ENCODE measurements at regions of chr9 and their contacts with region 1.

Region 1: GRCh38 chr9:13427587-13427986 is 148.1 kb upstream of the MPDZ start:
- DNase-seq: no peak
- ATAC-seq: peak; percentile 59

Region 2: GRCh38 chr9:13364271-13365000 is 63.2 kb before region 1 on chr9:
- intact Hi-C with region 1: no loop called
- DNase-seq: no peak
- ATAC-seq: no peak

Region 3: DNA sequence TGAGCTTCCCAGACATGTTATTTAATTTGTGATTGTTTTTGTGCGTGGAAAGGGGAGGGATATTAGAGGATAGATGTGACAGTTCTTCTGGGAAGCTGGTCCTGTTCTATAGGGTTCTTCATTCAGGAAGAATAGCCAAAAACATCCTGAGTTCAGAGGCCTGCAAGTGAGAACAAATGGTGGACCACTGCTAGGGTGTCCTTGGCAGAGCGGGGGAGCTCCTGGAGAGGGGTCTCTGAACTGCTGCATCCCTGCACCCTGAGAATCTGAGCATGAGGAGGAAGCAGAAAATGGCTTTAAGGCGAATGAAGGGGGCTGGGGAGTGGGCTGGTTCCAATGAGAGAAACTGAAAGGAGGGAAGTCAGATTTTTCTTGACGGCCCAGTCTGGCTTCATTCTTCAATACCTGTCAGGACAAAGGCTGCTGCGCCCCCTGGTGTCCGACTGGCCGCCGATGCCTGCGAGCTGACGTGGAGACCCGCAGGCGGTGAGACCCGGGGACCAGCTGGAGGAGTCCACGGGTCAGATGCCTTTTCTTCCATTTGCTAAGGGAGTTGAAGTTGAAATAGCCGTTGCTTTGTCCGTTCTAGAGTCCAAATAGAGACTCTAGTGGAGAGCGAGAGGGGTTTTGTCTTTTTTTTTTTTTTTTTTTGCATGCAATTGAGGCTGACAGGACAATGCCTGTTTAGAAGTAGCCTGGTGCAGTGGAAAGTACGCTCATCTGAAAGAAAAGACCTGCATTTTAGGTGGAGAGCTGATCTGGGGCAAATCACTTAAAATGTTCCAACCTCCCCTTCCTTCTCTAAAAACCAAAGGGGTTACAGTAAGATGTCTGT is 925.9 kb after region 1 on chr9:
- intact Hi-C with region 1: loop called (anchors 10 kb)
- DNase-seq: peak; percentile 98
- ATAC-seq: peak; percentile 73

Region 4: DNA sequence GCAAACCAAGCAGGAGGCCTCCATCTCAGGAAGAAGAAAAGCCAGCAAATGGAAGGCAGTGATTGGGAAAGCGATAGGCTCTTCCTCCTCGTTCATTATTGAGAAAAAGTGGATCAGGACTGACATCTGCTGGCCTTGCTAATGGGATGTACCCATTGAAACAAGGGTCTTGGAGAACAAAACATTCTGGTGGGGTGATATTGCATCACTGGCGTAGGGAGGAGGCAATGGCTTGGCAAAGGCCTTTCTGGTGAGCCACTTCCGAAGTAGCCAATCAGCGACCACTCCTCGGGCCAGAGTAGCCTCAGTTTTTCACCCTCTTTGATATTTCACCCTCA is 973.0 kb after region 1 on chr9:
- intact Hi-C with region 1: loop called (anchors 10 kb)
- DNase-seq: peak; percentile 36
- ATAC-seq: peak; percentile 89

Measured in left ventricle myocardium superior (tissue), 1 donor.